Heart right ventricle (tissue), 16 donors: ENCODE measurements at regions of chr1 and their contacts with region 1.

Region 1: GRCh38 chr1:23367791-23368561 is 1.7 kb downstream of the ZNF436 start:
- DNase-seq: peak; percentile 98 to 99
- ATAC-seq: peak; percentile 90 to 95 (median 93)
- H3K4me3 ChIP-seq: peak overlapping the region; percentile 65 to 98 (median 86)
- H3K27ac ChIP-seq: peak overlapping the region; percentile 76 to 99 (median 97)
- H3K4me1 ChIP-seq: peaks cover 11 to 51% (median 47%) of the 10 kb centered on the region in 9 donors
- H3K27me3 ChIP-seq: no peaks in the 10 kb centered on the region
- CTCF ChIP-seq: peak in 4 of 9 donors; percentile 12 to 31 (median 28)

Region 2: DNA sequence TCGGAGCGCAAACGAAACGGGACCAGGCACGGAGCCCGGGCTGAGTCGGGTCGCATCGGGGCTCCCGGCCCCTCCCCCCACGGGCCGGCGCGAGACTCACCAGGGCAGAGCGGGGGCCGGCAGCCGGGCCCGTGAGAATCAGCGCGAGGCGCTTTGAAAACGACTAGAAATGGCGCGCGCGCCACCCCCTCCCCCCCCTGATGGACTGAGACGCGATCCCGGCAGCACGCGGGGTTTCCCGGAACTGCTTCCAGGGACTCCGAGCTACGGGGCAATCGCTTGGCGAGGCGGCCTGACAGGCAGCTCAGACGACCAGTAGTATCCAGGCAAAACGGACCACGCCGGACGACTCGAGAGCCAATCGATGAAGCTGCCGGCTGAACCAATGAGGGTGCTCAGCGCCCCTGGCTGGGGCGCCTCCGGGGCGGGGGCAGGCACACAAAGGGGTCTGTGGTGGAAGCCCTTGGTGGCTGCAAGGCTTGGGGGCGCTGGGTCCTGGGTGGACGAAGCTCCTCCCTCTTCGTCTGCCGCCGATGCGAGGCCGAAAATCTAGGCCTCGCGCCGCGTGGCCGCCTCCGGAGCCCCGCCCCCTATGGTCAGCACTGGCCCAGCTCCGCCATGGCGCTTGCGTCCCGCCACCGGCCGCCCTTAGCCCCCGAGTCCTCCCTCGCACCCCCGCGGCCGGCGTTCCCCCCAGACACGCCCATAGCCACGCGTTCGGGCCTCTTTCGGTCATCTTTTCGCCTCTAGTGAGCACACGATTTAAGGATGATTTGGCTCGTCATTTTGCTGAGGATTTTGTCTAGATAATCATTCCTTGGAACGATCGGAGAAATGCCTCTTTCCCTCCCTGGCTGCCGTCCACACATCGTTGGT is 23.6 kb before region 1 on chr1 and contains the start of gene HNRNPR:
- intact Hi-C with region 1: loop called in 7 of 10 experiments (anchors 1 to 2 kb)
- DNase-seq: peak; percentile 100
- ATAC-seq: peak; percentile 96 to 99 (median 98)
- H3K4me3 ChIP-seq: peak within 1 kb of the TSS; percentile 87 to 99 (median 90)
- H3K27ac ChIP-seq: peak within 1 kb of the TSS; percentile 92 to 98 (median 96)
- H3K4me1 ChIP-seq: peaks cover 2 to 49% (median 42%) of the 10 kb centered on the region in 9 donors
- H3K27me3 ChIP-seq: no peaks in the 10 kb centered on the region
- CTCF ChIP-seq: peak in 6 of 9 donors; percentile 14 to 35 (median 22)
- total RNA-seq, gene HNRNPR: 56.7 to 72.7 (median 66.4) TPM

Region 3: DNA sequence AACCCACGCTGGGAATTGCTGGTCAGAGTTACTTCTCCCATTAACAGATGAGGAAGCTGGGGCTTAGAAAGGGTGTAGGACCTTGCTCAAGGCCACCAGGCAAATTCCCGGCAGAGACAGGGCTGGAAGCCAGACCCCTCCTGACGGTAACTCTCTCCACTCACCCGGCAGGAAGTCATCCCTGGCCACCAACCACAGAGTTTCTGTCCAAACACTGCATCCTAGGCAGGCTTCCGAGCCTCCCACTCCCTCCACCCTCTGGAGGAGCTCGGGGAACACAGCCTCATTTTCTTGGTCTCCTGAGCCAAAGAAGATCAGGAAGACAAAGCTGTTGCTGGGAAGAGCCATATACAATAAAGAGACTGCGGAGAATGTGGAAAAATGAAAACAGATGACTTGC is 26.7 kb after region 1 on chr1:
- intact Hi-C with region 1: loop called in 1 of 10 experiments (anchors 2 kb)
- DNase-seq: peak; percentile 76 to 86
- ATAC-seq: peak; percentile 81 to 89 (median 86)
- H3K4me3 ChIP-seq: no peak overlapping the region
- H3K27ac ChIP-seq: peak overlapping the region; percentile 37 to 90 (median 82)
- H3K4me1 ChIP-seq: peaks cover 2 to 43% (median 27%) of the 10 kb centered on the region in 9 donors
- H3K27me3 ChIP-seq: no peaks in the 10 kb centered on the region
- CTCF ChIP-seq: peak in 2 of 9 donors; percentile 21 to 23